Panc1 (cell line): ENCODE measurements at regions of chr9 and their contacts with region 1.

Region 1: DNA sequence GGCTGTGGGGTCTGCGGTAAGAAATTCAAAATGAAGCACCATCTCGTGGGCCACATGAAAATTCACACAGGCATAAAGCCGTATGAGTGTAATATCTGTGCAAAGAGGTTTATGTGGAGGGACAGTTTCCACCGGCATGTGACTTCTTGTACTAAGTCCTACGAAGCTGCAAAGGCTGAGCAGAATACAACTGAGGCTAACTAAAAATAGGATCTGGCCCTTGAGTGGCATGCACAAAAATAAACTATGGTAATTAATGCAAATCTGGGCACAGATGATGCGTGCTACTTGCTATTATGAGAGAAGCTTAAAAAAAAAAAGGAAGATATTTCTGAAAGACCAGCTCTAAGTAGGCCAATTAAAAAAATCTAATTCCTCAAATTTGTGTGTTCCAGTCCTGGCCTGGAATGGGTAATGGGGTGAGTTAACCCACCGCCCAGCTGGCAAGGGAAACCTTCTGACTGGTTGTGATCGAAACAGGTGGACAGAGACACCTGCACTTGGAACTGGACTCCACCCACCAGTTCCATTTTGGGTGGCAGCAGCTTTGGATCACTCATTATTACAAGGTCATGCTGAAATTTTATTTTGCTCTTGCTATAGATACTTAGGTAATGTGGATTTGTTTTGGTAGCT is 26.6 kb upstream of the ZBTB34 start:
- DNase-seq: no peak
- ATAC-seq: no peak
- H3K4me3 ChIP-seq: no peak overlapping the region
- H3K27ac ChIP-seq: no peak overlapping the region
- H3K4me1 ChIP-seq: no peaks in the 10 kb centered on the region
- H3K27me3 ChIP-seq: no peaks in the 10 kb centered on the region
- CTCF ChIP-seq: no peak

Region 2: DNA sequence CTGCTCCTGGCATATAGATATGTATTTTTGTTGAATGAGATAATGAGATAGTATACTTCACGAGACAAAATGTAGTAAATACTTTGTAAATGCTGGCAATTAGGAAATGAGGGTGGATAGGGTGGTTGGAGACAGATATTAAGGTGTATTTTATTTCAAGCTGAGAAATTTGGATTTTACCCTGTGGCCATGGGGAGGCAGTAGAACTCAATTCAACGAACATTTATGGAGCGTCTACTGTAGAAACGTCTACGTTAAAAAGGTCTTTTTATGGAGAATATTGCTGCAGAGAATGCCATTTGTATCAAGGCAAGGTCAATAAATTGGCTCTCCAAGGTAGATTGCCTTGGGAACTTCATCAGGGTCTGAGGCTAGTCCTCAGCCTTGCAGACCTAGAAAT is 59.3 kb after region 1 on chr9:
- CTCF ChIA-PET with region 1: interaction called, 10 read pairs
- POLR2A ChIA-PET with region 1: no interaction called
- in situ Hi-C with region 1: no loop called
- intact Hi-C with region 1: no loop called
- DNase-seq: no peak
- ATAC-seq: no peak
- H3K4me3 ChIP-seq: no peak overlapping the region
- H3K27ac ChIP-seq: no peak overlapping the region
- H3K4me1 ChIP-seq: no peaks in the 10 kb centered on the region
- H3K27me3 ChIP-seq: no peaks in the 10 kb centered on the region
- CTCF ChIP-seq: no peak; the same call in 1 of the 2 replicates